ENCODE measurements at regions of chr19 and their contacts with region 1.

Region 1: DNA sequence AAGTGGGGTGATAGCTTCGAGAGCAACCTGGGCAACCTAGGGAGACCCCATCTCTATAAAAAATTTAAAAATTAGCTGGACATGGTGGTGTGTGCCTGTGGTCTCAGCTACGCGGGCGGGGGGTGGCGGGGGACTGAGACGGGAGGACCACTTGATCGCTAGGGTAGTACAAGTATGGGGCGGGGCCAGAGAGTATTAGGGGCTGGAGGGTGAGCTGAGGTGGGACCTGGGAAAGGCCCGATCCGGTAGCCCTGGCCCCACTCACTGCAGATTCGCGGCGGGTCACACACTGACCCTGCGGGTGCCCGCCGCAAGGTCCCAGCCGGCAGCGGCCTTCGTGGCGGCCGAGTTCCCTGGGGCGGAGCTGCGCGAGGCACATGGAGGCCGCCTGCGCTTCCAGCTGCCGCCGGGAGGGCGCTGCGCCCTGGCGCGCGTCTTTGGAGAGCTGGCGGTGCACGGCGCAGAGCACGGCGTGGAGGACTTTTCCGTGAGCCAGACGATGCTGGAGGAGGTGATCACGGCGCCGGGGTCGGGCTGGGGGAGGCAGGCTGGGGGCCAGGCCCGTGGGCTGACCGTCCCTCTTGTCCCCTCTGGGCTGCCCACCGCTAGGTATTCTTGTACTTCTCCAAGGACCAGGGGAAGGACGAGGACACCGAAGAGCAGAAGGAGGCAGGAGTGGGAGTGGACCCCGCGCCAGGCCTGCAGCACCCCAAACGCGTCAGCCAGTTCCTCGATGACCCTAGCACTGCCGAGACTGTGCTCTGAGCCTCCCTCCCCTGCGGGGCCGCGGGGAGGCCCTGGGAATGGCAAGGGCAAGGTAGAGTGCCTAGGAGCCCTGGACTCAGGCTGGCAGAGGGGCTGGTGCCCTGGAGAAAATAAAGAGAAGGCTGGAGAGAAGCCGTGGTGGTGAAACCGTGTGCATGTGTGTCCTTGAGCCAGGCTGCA is 2.0 kb upstream of the ARHGAP45 start:
- DNase-seq: peak; percentile 81
- H3K4me3 ChIP-seq: peak overlapping the region; percentile 27
- H3K27ac ChIP-seq: peak overlapping the region; percentile 25
- H3K4me1 ChIP-seq: peaks cover 56% of the 10 kb centered on the region
- CTCF ChIP-seq: peak; percentile 78

Region 2: DNA sequence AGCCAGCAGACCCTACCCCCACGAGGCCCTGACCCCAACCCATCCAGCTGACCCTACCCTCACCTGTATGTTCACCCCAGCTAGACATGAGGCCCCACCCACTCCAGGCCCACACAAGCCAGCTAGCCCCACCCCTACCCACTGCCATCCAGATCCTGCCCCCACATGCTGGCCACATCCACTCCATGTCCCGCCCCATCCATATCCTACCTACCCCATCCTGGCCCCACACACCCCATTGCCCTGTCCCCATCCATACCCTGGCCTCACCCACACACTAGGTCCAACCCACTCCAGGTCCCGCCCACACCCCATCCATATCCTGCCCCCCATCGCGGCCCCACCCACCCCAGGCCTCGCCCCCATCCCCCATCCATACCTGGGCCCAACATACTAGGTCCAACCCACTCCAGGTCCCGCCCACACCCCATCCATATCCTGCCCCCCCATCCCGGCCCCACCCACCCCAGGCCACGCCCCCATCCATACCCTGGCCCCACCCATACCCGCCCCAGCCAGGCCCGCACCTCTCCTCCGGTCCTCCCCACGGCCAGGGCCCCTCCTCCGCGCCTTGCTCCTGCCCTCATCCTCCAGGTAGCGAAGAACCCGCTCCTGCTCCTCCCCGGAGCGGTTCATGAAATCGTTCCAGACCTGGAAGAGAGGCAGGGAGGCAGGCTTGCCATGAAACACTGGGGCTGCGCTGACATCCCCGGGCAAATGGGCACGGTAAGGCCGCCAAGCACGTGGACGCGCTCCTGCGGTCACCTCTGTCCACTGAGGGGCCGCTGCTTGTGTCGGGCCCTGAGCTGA is 164.4 kb before region 1 on chr19:
- CTCF ChIA-PET with region 1: no interaction called
- POLR2A ChIA-PET with region 1: no interaction called
- intact Hi-C with region 1: no loop called
- DNase-seq: peak; percentile 54
- H3K4me3 ChIP-seq: no peak overlapping the region
- H3K27ac ChIP-seq: no peak overlapping the region
- H3K4me1 ChIP-seq: peaks cover 24% of the 10 kb centered on the region
- CTCF ChIP-seq: no peak

Region 3: GRCh38 chr19:925526-926322 is 139.2 kb before region 1 on chr19 and contains the start of gene ARID3A:
- CTCF ChIA-PET with region 1: no interaction called
- POLR2A ChIA-PET with region 1: no interaction called
- intact Hi-C with region 1: no loop called
- DNase-seq: peak; percentile 85
- H3K4me3 ChIP-seq: peak within 1 kb of the TSS; percentile 91
- H3K27ac ChIP-seq: peak within 1 kb of the TSS; percentile 49
- H3K4me1 ChIP-seq: peaks cover 21% of the 10 kb centered on the region
- CTCF ChIP-seq: no peak
- total RNA-seq, gene ARID3A: 7.9 and 9.9 TPM in 2 replicates

Region 4: DNA sequence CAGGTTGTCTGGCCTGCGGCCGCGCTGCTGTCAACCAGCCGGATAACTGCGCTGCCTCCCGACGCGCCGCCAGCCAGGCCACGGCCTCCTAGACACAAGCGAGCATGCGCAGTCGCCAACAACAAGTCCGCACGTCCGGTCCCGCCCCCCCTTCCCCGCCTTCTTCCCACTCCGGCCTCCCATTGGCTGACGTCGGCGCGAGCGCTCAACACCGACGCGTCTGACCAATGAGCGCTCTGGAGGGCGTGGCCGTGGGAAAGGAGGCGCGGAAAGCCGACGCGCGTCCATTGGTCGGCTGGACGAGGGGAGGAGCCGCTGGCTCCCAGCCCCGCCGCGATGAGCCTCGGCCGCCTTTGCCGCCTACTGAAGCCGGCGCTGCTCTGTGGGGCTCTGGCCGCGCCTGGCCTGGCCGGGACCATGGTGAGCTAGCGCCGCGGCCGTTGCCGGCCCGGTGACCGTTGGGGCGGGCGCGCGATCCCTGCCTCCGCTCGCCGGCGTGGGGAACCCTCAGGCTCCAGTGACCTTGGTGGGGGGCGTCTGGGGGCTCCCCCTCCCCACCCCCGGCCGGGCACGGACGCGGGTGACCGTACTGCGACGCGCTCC is 38.9 kb after region 1 on chr19 and contains the start of gene GPX4:
- CTCF ChIA-PET with region 1: interaction called, 3 read pairs
- POLR2A ChIA-PET with region 1: interaction called, 3 read pairs
- intact Hi-C with region 1: loop called (anchors 5 kb)
- DNase-seq: peak; percentile 100
- H3K4me3 ChIP-seq: peak within 1 kb of the TSS; percentile 98
- H3K27ac ChIP-seq: peak within 1 kb of the TSS; percentile 80
- H3K4me1 ChIP-seq: peaks cover 48% of the 10 kb centered on the region
- CTCF ChIP-seq: no peak
- total RNA-seq, gene GPX4: 184 and 203 TPM in 2 replicates

Measured in OCI-LY7 (cell line).